OCI-LY7 (cell line): ENCODE measurements at regions of chr14 and their contacts with region 1.

Region 1: DNA sequence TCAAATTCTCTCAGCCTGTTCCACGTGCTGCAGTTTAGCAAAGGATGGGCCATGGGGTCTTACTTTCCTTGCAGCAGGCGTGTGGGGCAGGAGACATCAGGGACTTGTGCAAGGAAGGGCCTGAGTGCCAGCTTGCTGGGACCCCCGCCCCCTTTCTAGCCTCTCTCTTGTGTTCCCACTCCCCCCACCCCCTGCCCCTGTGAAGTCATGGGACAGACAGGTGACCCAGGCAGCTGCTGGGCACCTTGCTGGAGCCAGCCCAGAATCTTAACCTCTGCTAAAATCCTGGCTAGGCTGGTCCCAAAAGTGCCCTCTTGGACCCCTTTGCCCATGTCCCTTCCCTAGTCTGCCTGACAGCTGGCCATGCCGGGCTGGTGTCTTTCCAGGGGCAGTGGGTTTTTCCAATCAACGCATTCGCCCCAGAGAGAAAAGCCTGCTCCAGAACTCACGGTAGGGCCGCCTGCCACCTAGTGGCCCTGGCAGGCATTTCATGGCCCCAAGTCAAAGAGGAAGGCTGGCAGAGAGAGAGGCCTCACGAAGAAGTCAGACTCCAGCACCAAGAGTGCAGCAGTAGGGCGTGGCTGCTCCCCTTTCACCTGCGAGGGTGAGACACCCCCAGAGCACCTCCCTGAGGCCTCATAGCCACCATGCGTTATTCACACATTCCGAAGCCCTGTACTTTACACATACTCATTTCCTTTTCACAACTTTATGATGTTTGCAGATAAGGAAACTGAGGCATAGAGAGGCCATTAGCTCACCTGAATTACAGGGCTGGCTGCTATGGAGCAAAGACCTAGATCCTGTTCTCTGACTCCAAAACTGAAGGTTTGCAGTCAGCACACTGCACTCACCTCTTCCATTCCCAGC is 67.4 kb downstream of the LGMN start:
- DNase-seq: peak; percentile 74
- H3K4me3 ChIP-seq: no peak overlapping the region
- H3K27ac ChIP-seq: no peak overlapping the region
- H3K4me1 ChIP-seq: peaks cover 16% of the 10 kb centered on the region
- CTCF ChIP-seq: peak; percentile 92

Region 2: GRCh38 chr14:92589213-92589852 is 91.7 kb before region 1 on chr14:
- CTCF ChIA-PET with region 1: no interaction called
- POLR2A ChIA-PET with region 1: no interaction called
- intact Hi-C with region 1: loop called (anchors 2 kb)
- DNase-seq: peak; percentile 45
- H3K4me3 ChIP-seq: no peak overlapping the region
- H3K27ac ChIP-seq: no peak overlapping the region
- H3K4me1 ChIP-seq: no peaks in the 10 kb centered on the region
- CTCF ChIP-seq: peak; percentile 72

Region 3: GRCh38 chr14:92612988-92613658 is 67.9 kb before region 1 on chr14:
- CTCF ChIA-PET with region 1: no interaction called
- POLR2A ChIA-PET with region 1: no interaction called
- intact Hi-C with region 1: loop called (anchors 2 kb)
- DNase-seq: peak; percentile 63
- H3K4me3 ChIP-seq: no peak overlapping the region
- H3K27ac ChIP-seq: no peak overlapping the region
- H3K4me1 ChIP-seq: no peaks in the 10 kb centered on the region
- CTCF ChIP-seq: peak; percentile 95

Region 4: GRCh38 chr14:92692822-92693226 is 11.8 kb after region 1 on chr14:
- CTCF ChIA-PET with region 1: no interaction called
- POLR2A ChIA-PET with region 1: no interaction called
- intact Hi-C with region 1: no loop called
- DNase-seq: no peak
- H3K4me3 ChIP-seq: no peak overlapping the region
- H3K27ac ChIP-seq: no peak overlapping the region
- H3K4me1 ChIP-seq: no peaks in the 10 kb centered on the region
- CTCF ChIP-seq: no peak

Region 5: GRCh38 chr14:92793709-92794546 is 112.9 kb after region 1 on chr14 and contains the start of gene GOLGA5:
- CTCF ChIA-PET with region 1: no interaction called
- POLR2A ChIA-PET with region 1: no interaction called
- intact Hi-C with region 1: no loop called
- DNase-seq: peak; percentile 98
- H3K4me3 ChIP-seq: peak within 1 kb of the TSS; percentile 96
- H3K27ac ChIP-seq: peak within 1 kb of the TSS; percentile 43
- H3K4me1 ChIP-seq: peaks cover 19% of the 10 kb centered on the region
- CTCF ChIP-seq: no peak
- total RNA-seq, gene GOLGA5: 13.3 and 15.4 TPM in 2 replicates